Activated T-helper 2 cell treated with anti-CD3 and anti-CD28 coated beads, Interferon-gamma antibody, Interleukin-2, Interleukin-4, amounts not matched to agents 10 μg/mL and 5 μg/mL and 100 μg/mL, durations not matched to agents 14 hours and 24 hours and 36 hours (primary cell): ENCODE measurements at regions of chr2 and their contacts with region 1.

Region 1: DNA sequence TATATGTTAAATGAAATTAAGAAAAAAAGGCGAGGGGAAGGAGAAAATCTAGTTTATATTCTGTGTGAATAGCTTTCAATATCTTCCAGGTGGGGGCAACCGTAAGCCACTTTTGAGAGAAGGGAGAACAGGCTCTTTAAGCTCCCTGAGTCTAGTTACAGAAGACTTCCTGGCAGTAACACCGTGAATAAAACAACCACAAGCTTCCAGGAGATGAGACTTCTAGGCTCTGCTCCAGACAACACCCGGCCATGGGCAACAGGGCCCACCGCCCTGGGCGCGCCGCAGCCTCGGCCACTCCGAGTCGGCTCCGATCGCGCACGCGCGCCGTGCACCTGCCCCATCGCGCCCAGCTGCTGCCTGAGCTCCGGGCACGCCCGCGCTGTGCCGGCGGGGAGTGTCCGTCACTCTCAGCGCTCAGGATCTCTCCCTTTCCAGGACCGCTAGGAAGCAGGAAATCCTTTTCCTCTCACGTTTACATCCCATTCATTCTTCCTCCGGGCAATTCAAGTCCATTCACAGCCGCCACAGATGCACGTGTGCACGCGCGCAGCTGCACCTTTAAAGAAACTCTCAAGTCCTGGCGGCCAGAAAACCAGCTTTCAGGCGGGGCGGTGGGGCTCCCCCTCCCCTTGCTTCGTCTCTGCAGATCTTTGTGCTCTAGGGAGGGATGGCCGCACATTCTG is 19.4 kb upstream of the PAX3 start:
- DNase-seq: peak; percentile 42
- H3K4me3 Mint-ChIP-seq: peak overlapping the region; percentile 74
- H3K27ac Mint-ChIP-seq: no peak overlapping the region
- H3K4me1 Mint-ChIP-seq: peaks cover 12% of the 10 kb centered on the region
- H3K27me3 Mint-ChIP-seq: peaks cover 70% of the 10 kb centered on the region

Region 2: DNA sequence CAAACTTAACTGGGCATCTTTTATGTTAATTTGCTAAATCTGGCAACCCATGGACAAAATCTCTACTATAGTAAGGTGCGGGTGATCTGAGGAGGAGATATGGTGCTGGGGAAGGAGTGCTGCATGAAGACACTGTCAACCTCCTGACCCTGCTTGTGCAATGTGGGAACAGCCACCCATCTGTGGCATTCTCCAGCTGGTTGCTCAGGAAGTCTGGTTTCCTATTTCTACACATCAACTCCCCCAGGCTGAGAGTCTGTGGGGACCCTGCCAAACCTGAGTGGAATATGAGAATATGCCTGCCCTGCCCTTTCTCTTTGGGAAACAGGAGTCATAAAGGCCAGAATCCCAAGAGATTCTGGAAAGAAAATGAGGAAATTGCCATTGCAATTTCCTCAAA is 40.7 kb after region 1 on chr2:
- intact Hi-C with region 1: no loop called
- DNase-seq: no peak
- H3K4me3 Mint-ChIP-seq: no peak overlapping the region
- H3K27ac Mint-ChIP-seq: no peak overlapping the region
- H3K4me1 Mint-ChIP-seq: no peaks in the 10 kb centered on the region
- H3K27me3 Mint-ChIP-seq: no peaks in the 10 kb centered on the region

Region 3: DNA sequence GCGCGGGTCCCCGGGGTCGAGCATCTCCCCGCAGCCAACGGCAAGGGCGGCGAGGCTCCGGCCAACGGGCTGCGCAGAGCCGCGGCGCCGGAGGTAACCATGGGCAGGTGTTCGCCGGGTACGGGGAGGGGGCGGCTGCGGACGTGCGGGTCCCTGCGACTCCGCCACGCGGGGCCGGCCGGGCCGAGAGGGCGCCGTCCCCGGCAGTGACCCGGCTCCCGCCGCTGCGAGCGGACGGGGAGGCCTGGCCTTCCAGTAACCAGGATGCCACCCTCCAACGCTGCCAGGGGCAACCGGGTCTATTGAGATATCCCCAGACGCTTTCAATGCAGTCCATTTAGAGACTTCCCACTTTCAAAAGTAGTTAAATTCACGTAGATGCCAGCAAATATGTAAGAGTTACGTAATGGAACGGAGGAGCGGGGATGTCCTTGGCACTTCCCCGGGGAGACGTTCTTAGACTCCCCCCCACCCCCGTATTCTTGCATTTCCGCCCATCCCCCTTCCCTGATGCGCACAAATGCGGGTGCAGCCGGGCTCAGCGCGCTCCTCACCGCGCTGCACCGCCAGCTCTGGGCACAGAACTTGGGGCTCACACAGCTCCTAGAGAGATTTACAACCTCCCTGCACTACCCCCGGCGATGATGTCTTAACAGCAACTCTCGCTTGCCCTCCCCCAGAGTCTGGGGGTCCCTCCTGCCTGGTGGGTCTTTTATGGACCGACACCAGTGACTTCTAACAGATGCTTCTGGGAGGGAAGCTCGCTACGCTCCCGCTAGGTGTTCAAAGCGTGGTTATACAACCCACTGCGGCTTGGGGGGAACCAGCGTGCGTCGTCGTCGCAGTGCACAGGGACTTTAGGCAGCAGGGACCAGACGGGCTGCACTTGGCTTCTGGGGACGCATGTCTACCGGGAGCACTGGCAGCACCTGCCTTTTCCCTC is 106.8 kb after region 1 on chr2:
- intact Hi-C with region 1: loop called (anchors 5 kb)
- DNase-seq: no peak
- H3K4me3 Mint-ChIP-seq: peak overlapping the region; percentile 88
- H3K27ac Mint-ChIP-seq: peak overlapping the region; percentile 86
- H3K4me1 Mint-ChIP-seq: peaks cover 37% of the 10 kb centered on the region
- H3K27me3 Mint-ChIP-seq: peaks cover 21% of the 10 kb centered on the region

Region 4: DNA sequence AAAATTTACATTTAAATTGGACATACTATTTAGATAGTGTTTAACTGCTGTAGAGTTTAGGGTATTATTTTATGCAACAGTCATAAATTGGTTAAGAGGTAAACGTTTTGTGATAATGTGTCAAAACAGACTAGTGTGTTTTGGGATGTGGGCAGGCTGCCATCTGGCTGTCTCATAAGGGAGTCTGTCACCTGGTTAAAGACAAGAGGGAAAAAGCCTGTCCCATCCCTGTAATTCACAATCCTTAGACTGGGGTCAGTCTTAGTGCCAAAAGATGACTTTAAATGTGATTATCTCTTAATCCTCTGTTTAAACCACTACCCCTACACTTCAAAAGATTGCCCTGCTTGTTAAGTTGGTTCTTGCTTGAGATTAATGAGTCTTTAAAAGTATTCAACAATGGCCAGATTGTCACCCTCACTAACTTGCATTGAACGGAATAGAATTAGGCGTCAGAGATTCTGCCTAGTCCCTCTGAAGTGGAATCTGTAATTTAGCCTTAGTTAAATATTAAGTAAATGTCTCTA is 165.4 kb after region 1 on chr2:
- intact Hi-C with region 1: loop called (anchors 5 kb)
- DNase-seq: no peak
- H3K4me3 Mint-ChIP-seq: no peak overlapping the region
- H3K27ac Mint-ChIP-seq: no peak overlapping the region
- H3K4me1 Mint-ChIP-seq: peaks cover 9% of the 10 kb centered on the region
- H3K27me3 Mint-ChIP-seq: peaks cover 6% of the 10 kb centered on the region

Region 5: DNA sequence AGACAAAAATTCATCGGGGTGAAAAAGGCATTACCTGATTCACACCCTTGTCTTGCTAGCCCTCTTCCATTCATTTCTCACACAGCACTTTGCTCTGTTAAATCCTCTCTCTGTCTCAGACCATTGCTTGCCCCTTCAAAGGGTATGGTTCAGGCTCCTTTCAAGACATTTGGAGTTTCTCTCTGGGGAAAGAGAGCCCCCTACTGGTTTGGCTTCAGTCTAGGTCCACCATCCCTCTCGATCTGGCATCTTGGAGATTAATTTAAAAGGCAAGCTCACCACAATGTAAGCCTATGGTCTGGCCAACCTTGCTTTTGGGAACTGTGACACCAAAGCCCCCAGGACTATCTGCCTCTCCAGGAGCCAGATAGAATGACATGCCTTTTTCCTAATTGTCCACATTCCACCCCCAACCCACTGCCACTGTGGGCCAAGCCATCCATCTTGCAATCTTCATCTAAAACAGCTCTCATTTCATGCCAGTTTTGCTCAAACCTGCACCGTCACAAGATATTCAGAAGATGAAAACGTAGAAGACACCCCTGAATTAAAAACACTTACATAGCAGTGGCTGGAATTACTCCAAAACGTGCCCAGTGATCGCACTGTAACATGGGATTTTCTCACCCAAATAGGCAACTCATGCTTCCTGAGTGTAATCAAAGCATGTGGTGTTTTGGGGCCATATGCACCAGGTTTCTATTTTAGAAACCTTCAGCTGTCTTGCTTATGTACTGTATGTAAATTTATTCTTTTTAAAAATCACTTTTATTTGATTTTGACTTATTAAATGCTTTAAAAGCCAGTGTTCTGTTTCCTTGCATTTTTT is 243.9 kb after region 1 on chr2:
- intact Hi-C with region 1: loop called (anchors 1 kb)
- DNase-seq: no peak
- H3K4me3 Mint-ChIP-seq: no peak overlapping the region
- H3K27ac Mint-ChIP-seq: no peak overlapping the region
- H3K4me1 Mint-ChIP-seq: no peaks in the 10 kb centered on the region
- H3K27me3 Mint-ChIP-seq: no peaks in the 10 kb centered on the region

Region 6: GRCh38 chr2:222613715-222614331 is 295.7 kb after region 1 on chr2:
- intact Hi-C with region 1: loop called (anchors 1 kb)
- DNase-seq: no peak
- H3K4me3 Mint-ChIP-seq: no peak overlapping the region
- H3K27ac Mint-ChIP-seq: no peak overlapping the region
- H3K4me1 Mint-ChIP-seq: peaks cover 4% of the 10 kb centered on the region
- H3K27me3 Mint-ChIP-seq: no peaks in the 10 kb centered on the region

Region 7: DNA sequence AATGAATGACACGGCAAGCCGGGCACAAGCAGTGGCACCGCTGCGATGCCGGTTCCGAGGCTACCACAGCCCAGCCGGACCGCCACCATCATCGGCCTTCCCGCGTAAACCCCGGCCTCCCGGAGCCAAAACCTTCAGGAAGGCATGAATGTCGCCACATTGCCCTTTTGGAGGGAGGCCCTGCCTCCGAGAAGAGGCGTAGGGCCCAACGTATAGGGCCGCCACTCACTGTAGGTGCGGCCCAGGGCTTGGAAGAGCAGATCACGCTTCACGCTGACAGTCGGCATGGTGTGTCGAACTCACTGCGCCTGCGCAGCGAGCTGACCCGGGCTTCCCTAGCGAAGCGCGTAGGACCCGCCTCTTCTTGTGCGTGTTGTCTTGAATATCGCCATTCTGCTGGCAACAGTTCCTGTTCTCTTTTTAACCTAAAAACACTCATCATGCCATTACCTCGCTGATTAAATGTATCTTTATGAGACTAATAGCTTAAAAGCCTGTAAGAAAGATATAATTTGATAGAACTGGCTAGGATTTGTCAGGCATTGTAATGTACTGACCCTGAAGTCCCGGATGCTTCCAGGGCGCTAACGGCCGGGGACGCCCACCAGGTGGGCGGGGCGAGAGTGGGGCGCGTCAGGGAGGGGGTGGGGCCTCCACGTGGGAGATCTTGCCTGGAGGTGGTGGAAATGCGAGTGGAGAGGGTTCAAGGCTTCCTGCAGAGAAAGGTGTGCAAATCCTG is 337.8 kb after region 1 on chr2 and contains the start of gene FARSB:
- intact Hi-C with region 1: loop called (anchors 2 kb)
- DNase-seq: peak; percentile 92
- H3K4me3 Mint-ChIP-seq: peak within 1 kb of the TSS; percentile 98
- H3K27ac Mint-ChIP-seq: peak within 1 kb of the TSS; percentile 93
- H3K4me1 Mint-ChIP-seq: peaks cover 38% of the 10 kb centered on the region
- H3K27me3 Mint-ChIP-seq: no peaks in the 10 kb centered on the region
- total RNA-seq, gene FARSB: 47.7 and 49.8 TPM in 2 replicates